ENCODE measurements at regions of chr16 and their contacts with region 1.

Region 1: GRCh38 chr16:57591086-57591869 is 37.2 kb upstream of the ADGRG1 start:
- DNase-seq: peak; percentile 78
- H3K4me3 Mint-ChIP-seq: peak overlapping the region; percentile 61
- H3K27ac Mint-ChIP-seq: peak overlapping the region; percentile 91
- H3K4me1 Mint-ChIP-seq: peaks cover 57% of the 10 kb centered on the region
- H3K27me3 Mint-ChIP-seq: peaks cover 3% of the 10 kb centered on the region

Region 2: DNA sequence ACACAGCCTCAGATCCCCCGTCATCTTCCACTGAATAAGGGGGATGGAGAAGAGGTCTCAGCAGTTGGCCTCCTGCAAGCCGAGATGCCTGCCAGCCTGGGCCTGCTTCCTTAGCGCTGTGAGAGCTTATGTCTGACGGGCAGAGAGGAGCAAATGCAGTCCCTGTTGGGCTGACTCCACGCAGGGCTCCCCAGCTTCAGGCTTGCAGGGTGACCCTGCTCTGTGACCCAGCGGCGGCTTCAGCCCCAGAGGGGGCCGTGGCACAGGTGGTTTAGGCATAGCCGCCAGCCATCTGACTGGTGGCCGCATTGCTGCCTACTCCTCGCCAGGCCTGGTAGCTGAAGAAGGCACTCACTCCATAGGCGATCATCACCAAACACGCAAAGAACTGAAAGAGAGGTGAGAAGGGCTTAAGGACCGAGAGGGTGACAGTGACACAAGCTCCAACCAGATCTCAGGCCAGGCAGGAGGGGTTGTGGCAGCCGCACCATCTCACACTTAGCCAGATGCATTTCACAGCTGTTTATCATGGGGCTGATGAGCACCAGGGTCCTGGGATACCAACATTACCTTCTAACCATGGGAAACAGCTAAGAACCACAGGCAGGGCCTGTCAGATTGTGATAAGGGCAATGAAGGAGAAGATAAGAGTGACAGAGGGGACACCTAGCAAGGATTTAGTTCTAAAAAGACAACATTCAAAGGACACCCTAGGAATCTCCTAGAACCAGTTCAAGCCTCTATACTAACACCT is 334.5 kb before region 1 on chr16:
- CTCF ChIA-PET with region 1: no interaction called
- POLR2A ChIA-PET with region 1: no interaction called
- DNase-seq: peak; percentile 10
- H3K4me3 Mint-ChIP-seq: no peak overlapping the region
- H3K27ac Mint-ChIP-seq: no peak overlapping the region
- H3K4me1 Mint-ChIP-seq: peaks cover 6% of the 10 kb centered on the region
- H3K27me3 Mint-ChIP-seq: no peaks in the 10 kb centered on the region

Region 3: GRCh38 chr16:57609541-57610401 is 18.5 kb after region 1 on chr16:
- CTCF ChIA-PET with region 1: interaction called, 101 read pairs
- POLR2A ChIA-PET with region 1: interaction called, 66 read pairs
- DNase-seq: peak; percentile 81
- H3K4me3 Mint-ChIP-seq: peak overlapping the region; percentile 40
- H3K27ac Mint-ChIP-seq: peak overlapping the region; percentile 89
- H3K4me1 Mint-ChIP-seq: peaks cover 63% of the 10 kb centered on the region
- H3K27me3 Mint-ChIP-seq: peaks cover 2% of the 10 kb centered on the region

Region 4: GRCh38 chr16:57639172-57639887 is 48.1 kb after region 1 on chr16:
- CTCF ChIA-PET with region 1: interaction called, 15 read pairs
- POLR2A ChIA-PET with region 1: interaction called, 6 read pairs
- DNase-seq: no peak
- H3K4me3 Mint-ChIP-seq: no peak overlapping the region
- H3K27ac Mint-ChIP-seq: no peak overlapping the region
- H3K4me1 Mint-ChIP-seq: peaks cover 2% of the 10 kb centered on the region
- H3K27me3 Mint-ChIP-seq: peaks cover 41% of the 10 kb centered on the region

Region 5: GRCh38 chr16:57734925-57735754 is 143.9 kb after region 1 on chr16:
- CTCF ChIA-PET with region 1: interaction called, 11 read pairs
- POLR2A ChIA-PET with region 1: interaction called, 19 read pairs
- DNase-seq: peak; percentile 98
- H3K4me3 Mint-ChIP-seq: peak overlapping the region; percentile 93
- H3K27ac Mint-ChIP-seq: peak overlapping the region; percentile 81
- H3K4me1 Mint-ChIP-seq: peaks cover 30% of the 10 kb centered on the region
- H3K27me3 Mint-ChIP-seq: no peaks in the 10 kb centered on the region

Measured in activated CD4-positive, alpha-beta memory T cell treated with anti-CD3 and anti-CD28 coated beads, Interleukin-2, amount 10 ng/mL, durations not matched to agents 7 days and 5 days (primary cell).